Aorta (tissue), 5 donors: ENCODE measurements at regions of chr4 and their contacts with region 1.

Region 1: GRCh38 chr4:140153718-140154571 is at the start of gene MAML3:
- DNase-seq: peak; percentile 96 to 98
- ATAC-seq: peak; percentile 89
- H3K4me3 ChIP-seq: peak within 1 kb of the TSS; percentile 94 to 97
- H3K27ac ChIP-seq: peak within 1 kb of the TSS; percentile 2 to 91
- H3K4me1 ChIP-seq: no peaks in the 10 kb centered on the region
- H3K27me3 ChIP-seq: no peaks in the 10 kb centered on the region
- total RNA-seq, gene MAML3: 8.3 to 10.5 TPM

Region 2: DNA sequence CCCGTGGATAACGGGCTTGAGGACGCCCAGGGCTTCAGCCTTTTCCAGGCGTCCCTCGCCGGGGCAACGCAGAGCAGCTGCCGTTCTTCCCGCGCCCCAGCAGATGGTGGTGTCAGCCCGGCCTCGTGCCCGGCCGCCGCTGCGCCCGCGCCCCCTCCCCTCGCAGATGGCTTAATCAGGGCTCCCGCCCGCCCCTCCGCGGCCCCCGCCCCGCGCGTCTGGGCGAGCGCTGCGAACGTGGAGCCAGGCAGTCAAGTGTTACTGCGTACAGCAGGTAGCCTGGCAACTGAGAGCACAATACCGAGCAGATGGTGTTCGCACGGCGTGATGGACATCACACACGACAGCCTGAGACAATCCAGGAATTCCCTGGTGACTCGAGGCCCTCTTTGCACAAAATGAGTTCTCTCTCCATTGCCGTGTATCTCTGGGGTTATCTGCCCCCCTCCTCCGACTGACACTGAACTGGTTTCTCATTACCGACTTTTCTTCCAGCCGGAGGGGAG is 419.0 kb before region 1 on chr4:
- intact Hi-C with region 1: loop called (anchors 2 to 5 kb)
- DNase-seq: peak; percentile 89 to 95
- ATAC-seq: peak; percentile 98
- H3K4me3 ChIP-seq: peak overlapping the region; percentile 57 to 72
- H3K27ac ChIP-seq: peak overlapping the region in 1 of 2 donors; percentile 2
- H3K4me1 ChIP-seq: peaks cover under 1 to 2% of the 10 kb centered on the region in 2 donors
- H3K27me3 ChIP-seq: no peaks in the 10 kb centered on the region

Region 3: DNA sequence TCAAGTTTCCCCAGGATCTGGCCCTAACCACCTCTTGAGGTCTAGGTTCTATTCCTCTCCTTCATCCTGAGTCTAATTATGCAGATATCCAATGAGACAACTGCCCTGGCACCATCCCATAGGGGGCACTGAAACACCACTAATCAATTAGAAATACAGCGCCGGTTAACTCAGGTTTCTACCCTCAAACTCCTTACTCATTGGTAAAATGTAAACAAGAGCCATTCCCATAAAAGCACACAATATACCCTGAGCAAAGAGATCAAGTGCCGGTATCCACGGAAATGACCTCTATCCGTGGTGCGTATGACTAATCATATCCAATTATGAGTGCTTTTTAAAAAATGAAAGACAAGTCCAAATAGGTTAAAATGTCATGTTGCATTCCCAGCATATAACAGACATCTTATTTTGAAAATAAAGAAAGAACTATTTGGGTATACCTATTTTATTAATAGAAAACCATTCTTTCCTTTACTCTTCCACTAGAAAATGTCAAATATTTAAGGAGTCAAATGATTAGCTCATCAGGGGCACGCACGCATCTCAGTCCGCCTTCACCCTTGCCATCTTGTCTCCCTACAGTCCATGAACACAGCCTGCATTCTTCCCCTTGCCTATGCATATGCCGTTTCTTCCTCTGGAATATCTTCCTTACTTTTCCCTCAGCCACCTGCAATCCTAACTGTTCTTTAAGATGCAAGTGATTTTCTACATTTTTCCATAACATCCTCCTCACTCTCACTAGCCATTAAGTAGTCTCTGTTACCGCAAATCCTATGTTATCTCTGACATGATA is 141.1 kb before region 1 on chr4:
- intact Hi-C with region 1: loop called (anchors 5 kb)
- DNase-seq: peak in 1 of 2 donors; percentile 62
- ATAC-seq: peak; percentile 71
- H3K4me3 ChIP-seq: no peak overlapping the region
- H3K27ac ChIP-seq: no peak overlapping the region
- H3K4me1 ChIP-seq: no peaks in the 10 kb centered on the region
- H3K27me3 ChIP-seq: no peaks in the 10 kb centered on the region

Region 4: DNA sequence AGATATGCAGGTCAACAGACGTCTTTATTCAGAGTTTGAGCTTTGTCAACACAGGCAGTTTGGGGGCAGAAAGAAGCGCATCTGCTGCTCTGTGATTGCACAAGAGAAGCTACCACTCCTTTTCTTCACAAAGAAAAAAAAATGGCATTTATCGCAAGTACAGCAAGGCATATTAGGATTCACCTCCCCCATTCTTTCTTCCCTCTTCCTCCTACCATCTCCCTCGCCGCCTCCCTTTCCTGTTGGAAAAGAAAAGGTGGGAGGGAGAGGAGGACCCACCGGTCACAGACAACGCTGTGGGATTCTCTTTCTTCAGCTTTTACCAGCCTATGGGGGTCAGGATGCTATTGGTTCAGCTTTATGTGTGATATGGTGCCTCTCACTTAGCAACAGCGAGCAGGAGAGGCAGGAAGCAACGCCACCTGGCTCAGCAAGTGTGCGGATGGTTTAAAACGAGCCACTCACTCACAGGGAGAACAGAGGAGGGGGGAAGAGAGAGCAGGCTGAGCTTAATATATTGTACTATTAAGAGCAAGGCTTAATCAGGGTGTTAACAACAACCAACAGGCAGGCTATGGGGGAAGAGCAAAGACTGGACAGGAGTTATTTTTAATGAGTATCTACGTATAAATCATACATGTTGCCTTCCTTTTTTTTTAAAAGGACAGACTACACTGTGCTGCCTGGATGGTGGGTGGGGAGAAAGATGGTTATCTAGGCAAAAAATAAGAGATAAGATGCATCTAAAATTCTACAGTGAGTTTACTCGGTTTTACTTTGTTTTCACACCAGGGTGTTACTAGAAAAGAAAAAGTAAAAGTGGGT is 104.7 kb before region 1 on chr4:
- intact Hi-C with region 1: loop called (anchors 2 kb)
- DNase-seq: peak in 1 of 2 donors; percentile 46
- ATAC-seq: peak; percentile 80
- H3K4me3 ChIP-seq: peak overlapping the region; percentile 7 to 55
- H3K27ac ChIP-seq: peak overlapping the region in 1 of 2 donors; percentile 1
- H3K4me1 ChIP-seq: peaks cover 3 to 6% of the 10 kb centered on the region in 2 donors
- H3K27me3 ChIP-seq: no peaks in the 10 kb centered on the region

Region 5: GRCh38 chr4:140095694-140096482 is 58.1 kb before region 1 on chr4:
- intact Hi-C with region 1: loop called (anchors 2 to 5 kb)
- DNase-seq: peak in 1 of 2 donors; percentile 72
- ATAC-seq: peak; percentile 38
- H3K4me3 ChIP-seq: no peak overlapping the region
- H3K27ac ChIP-seq: peak overlapping the region; percentile 12 to 27
- H3K4me1 ChIP-seq: peaks cover 6 to 11% of the 10 kb centered on the region in 2 donors
- H3K27me3 ChIP-seq: no peaks in the 10 kb centered on the region

Region 6: DNA sequence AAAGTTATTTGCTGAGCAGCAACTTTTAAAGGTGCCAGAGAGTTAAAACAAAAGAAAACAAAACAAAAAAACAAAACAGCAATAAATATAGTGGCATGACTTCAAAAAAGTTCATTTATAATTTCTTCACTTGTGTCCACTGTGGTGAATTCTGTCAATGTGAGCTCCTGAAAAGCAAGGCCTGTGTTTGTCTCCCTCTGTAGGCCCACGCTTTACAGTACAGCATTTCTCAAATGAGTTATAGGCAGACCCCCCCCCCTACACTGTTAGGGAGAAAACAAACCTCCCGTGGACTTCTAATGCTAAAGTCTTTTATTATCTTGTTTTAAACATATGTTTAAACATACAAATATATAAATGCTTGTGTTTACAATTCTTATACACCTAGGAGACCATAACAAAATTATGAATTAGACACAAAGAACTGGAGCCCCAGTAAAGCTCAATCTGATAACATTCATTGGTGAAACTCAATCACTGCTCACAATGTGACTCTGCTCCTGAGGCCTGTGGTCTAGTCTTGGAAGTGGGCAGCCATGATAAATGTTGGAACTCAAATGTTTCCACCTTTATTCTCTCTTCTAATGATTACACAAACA is 172.5 kb after region 1 on chr4:
- intact Hi-C with region 1: loop called in 1 of 2 experiments (anchors 10 kb)
- DNase-seq: no peak
- ATAC-seq: no peak
- H3K4me3 ChIP-seq: no peak overlapping the region
- H3K27ac ChIP-seq: no peak overlapping the region
- H3K4me1 ChIP-seq: no peaks in the 10 kb centered on the region
- H3K27me3 ChIP-seq: no peaks in the 10 kb centered on the region

Region 7: GRCh38 chr4:140861359-140862176 is 707.6 kb after region 1 on chr4:
- intact Hi-C with region 1: loop called in 1 of 2 experiments (anchors 10 kb)
- DNase-seq: peak in 1 of 2 donors; percentile 56
- ATAC-seq: peak; percentile 86
- H3K4me3 ChIP-seq: no peak overlapping the region
- H3K27ac ChIP-seq: no peak overlapping the region
- H3K4me1 ChIP-seq: peaks cover 0 to 1% of the 10 kb centered on the region in 2 donors
- H3K27me3 ChIP-seq: no peaks in the 10 kb centered on the region